Dorsolateral prefrontal cortex (tissue), 120 donors: ENCODE measurements at regions of chr15 and their contacts with region 1.

Region 1: GRCh38 chr15:45705510-45706473 is 71.0 kb downstream of the SQOR start:
- DNase-seq: peak; percentile 56 to 79 (median 72)
- H3K4me3 ChIP-seq: peak overlapping the region; percentile 24 to 73 (median 60)
- H3K27ac ChIP-seq: peak overlapping the region in 3 of 59 donors; percentile 3 to 44 (median 22)
- H3K27me3 ChIP-seq: peaks cover 0 to 6% (median 0%) of the 10 kb centered on the region in 45 donors
- CTCF ChIP-seq: peak; percentile 89 to 99 (median 97)

Region 2: GRCh38 chr15:45790325-45790943 is 84.6 kb after region 1 on chr15:
- intact Hi-C with region 1: loop called (anchors 5 to 10 kb)
- DNase-seq: peak in 1 of 10 donors; percentile 29
- H3K4me3 ChIP-seq: no peak overlapping the region
- H3K27ac ChIP-seq: no peak overlapping the region
- H3K27me3 ChIP-seq: peaks cover 0 to 18% (median 0%) of the 10 kb centered on the region in 45 donors
- CTCF ChIP-seq: peak; percentile 15 to 72 (median 53)

Region 3: GRCh38 chr15:45795440-45796069 is 89.8 kb after region 1 on chr15:
- intact Hi-C with region 1: loop called (anchors 5 to 10 kb)
- DNase-seq: peak in 2 of 10 donors; percentile 24 to 39
- H3K4me3 ChIP-seq: no peak overlapping the region
- H3K27ac ChIP-seq: no peak overlapping the region
- H3K27me3 ChIP-seq: peaks cover 0 to 18% (median 0%) of the 10 kb centered on the region in 45 donors
- CTCF ChIP-seq: peak; percentile 37 to 76 (median 59)

Region 4: DNA sequence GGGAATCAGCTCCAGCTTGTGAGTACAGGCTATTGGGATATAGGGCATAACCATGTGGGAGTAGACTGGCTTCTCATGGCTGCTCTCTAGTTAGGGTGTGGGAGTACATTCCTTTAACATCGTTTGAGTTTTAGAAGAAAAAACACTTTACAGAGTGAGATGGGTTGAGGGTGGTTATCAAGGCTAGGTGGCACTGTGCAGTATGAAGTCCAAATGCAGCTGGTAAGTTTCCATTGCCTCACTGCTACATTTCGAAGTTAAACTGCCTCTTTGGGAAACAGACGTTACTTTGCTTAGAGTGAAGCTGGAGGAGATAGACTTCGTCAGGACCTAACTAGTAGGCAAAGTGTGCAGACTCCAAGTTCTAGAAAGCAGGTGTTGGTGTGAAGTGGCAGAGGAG is 121.5 kb after region 1 on chr15:
- intact Hi-C with region 1: no loop called
- DNase-seq: no peak
- H3K4me3 ChIP-seq: no peak overlapping the region
- H3K27ac ChIP-seq: no peak overlapping the region
- H3K27me3 ChIP-seq: no peaks in the 10 kb centered on the region
- CTCF ChIP-seq: no peak

Region 5: GRCh38 chr15:45993508-45993907 is 287.7 kb after region 1 on chr15:
- intact Hi-C with region 1: no loop called
- DNase-seq: no peak
- H3K4me3 ChIP-seq: no peak overlapping the region
- H3K27ac ChIP-seq: no peak overlapping the region
- H3K27me3 ChIP-seq: no peaks in the 10 kb centered on the region
- CTCF ChIP-seq: no peak